ENCODE measurements at regions of chr6 and their contacts with region 1.

Region 1: DNA sequence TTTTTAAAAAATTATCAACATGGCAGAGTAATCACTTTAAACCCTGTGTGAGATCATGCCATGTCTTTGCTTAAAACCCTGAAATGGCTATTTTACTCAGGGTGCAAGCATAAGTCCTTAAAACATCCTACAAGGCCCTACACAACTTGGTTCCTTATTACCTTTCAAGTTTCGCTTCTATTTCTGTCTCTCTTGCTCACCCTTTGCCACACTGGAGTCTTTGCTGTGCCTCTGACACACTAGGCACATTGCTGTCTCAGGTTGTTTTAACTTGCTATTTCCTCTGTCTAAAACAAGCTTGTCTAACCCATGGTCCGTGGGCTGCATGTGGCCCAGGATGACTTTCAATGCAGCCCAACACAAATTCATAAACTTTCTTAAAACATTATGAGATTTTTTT is 55.6 kb downstream of the KIAA0408 start:
- DNase-seq: no peak
- H3K4me3 Mint-ChIP-seq: no peak overlapping the region
- H3K27ac Mint-ChIP-seq: peak overlapping the region; percentile 61
- H3K4me1 Mint-ChIP-seq: peaks cover 13% of the 10 kb centered on the region
- H3K27me3 Mint-ChIP-seq: no peaks in the 10 kb centered on the region

Region 2: GRCh38 chr6:127305741-127306140 is 97.9 kb before region 1 on chr6:
- intact Hi-C with region 1: no loop called
- DNase-seq: no peak
- H3K4me3 Mint-ChIP-seq: no peak overlapping the region
- H3K27ac Mint-ChIP-seq: no peak overlapping the region
- H3K4me1 Mint-ChIP-seq: peaks cover 11% of the 10 kb centered on the region
- H3K27me3 Mint-ChIP-seq: no peaks in the 10 kb centered on the region

Region 3: DNA sequence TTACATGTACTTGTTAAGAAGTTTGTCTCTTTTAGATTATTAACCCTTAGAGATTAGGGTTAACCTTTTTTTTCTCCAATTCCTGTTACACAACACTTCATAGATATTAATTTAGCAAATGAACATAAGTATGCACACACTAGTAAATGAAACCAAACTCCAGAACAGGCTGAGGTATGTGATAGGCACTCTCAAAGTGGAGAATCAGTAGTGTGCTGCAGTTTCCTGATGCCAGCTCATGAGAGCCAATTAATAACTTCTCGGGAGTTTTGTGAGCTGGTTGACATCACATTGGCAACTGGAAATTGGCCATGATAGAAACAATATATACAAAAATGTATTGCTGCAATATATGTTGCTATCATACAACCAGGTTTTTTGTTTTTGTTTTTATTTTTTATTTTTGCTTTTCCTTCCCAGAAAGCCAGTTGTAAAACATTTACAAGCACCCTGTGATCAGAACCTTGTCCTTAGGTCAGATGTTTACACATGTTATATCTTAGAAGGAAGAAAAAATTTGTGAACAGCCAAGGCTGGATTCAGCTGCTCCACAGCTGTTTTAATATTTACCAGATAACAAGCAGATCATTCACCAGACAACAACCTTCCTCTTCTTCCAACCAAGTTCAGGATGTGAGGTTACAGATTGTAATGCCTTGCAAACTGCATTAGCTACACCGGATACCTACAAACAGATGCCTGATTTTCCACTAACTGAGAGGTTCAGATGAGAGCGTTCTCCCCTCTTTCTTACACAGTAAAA is 17.8 kb before region 1 on chr6:
- intact Hi-C with region 1: loop called (anchors 2 kb)
- DNase-seq: no peak
- H3K4me3 Mint-ChIP-seq: no peak overlapping the region
- H3K27ac Mint-ChIP-seq: no peak overlapping the region
- H3K4me1 Mint-ChIP-seq: no peaks in the 10 kb centered on the region
- H3K27me3 Mint-ChIP-seq: peaks cover 4% of the 10 kb centered on the region

Measured in activated CD4-positive, alpha-beta T cell treated with anti-CD3 and anti-CD28 coated beads, Interleukin-2, amount 10 ng/mL, durations not matched to agents 24 days and 14 days (primary cell).